Panc1 (cell line): ENCODE measurements at regions of chr1 and their contacts with region 1.

Region 1: GRCh38 chr1:20151906-20152598 is 12.9 kb downstream of the PLA2G2F start:
- DNase-seq: peak; percentile 30
- ATAC-seq: peak; percentile 95
- H3K4me3 ChIP-seq: peak overlapping the region; percentile 25 to 54
- H3K27ac ChIP-seq: no peak overlapping the region
- H3K4me1 ChIP-seq: peaks cover 4% of the 10 kb centered on the region; the same call in 1 of the 2 replicates
- H3K27me3 ChIP-seq: no peaks in the 10 kb centered on the region
- CTCF ChIP-seq: peak; percentile 94

Region 2: DNA sequence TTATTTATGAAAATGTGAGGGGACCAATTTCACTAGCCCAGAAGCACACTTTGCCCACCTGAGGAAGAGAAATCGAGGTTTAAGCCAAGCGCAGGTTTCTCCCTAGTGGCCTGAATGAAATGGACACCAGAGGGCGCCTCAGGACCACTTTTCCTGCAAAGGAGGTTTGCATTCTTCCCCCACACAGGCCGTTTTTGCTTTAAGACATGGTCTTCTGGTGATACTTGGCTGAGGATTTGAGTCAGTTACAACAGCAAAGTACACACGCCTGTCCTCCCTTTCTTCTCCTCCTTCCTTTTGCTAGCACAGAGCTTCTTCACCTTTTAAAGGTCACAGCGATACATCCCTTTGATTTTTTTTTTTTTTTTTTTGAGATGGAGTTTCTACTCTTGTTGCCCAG is 234.0 kb before region 1 on chr1:
- CTCF ChIA-PET with region 1: interaction called, 11 read pairs
- POLR2A ChIA-PET with region 1: interaction called, 5 read pairs
- in situ Hi-C with region 1: no loop called
- intact Hi-C with region 1: loop called (anchors 2 kb)
- DNase-seq: peak; percentile 64
- ATAC-seq: peak; percentile 84
- H3K4me3 ChIP-seq: no peak overlapping the region
- H3K27ac ChIP-seq: no peak overlapping the region
- H3K4me1 ChIP-seq: no peaks in the 10 kb centered on the region
- H3K27me3 ChIP-seq: no peaks in the 10 kb centered on the region
- CTCF ChIP-seq: peak; percentile 91

Region 3: GRCh38 chr1:19974822-19975416 is 177.1 kb before region 1 on chr1:
- CTCF ChIA-PET with region 1: interaction called, 12 read pairs
- POLR2A ChIA-PET with region 1: no interaction called
- in situ Hi-C with region 1: no loop called
- intact Hi-C with region 1: loop called (anchors 2 kb)
- DNase-seq: peak; percentile 45
- ATAC-seq: peak; percentile 91
- H3K4me3 ChIP-seq: no peak overlapping the region
- H3K27ac ChIP-seq: no peak overlapping the region
- H3K4me1 ChIP-seq: no peaks in the 10 kb centered on the region
- H3K27me3 ChIP-seq: peaks cover 15% of the 10 kb centered on the region
- CTCF ChIP-seq: peak; percentile 92

Region 4: DNA sequence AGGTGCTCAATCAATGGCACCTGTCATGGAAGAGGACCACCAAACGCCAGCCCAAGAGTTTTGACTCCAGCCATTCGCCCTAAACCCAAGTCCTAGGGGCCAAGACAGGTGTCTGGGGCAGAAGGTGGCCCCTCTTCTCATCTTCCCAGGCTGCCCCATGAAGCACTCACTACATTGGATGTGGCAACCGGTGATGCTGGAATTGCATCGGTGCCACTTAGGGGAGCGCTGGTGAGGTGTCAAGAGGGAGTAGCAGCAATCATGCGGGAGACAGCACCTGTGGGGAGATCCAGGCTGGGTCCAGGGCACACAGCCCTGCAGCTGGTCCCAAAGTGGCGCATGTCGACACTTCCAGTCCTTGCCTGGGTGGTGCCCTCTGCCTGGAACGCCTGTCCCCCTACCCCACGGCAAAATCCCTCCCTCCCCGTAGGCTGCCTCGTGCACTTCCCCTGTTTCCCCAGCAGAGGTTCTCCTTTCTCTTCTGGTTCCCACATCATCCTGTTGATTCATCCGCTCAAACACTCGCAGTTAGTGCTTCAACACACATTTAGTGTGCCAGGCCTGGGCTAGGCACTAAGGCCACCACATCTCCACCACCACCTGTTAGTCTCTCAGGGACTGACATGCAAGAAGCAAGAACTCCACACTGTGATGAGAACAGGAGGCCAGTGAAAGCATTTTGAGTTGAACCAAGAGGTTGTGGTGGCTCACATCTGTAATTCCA is 51.3 kb before region 1 on chr1:
- CTCF ChIA-PET with region 1: interaction called, 3 read pairs
- POLR2A ChIA-PET with region 1: no interaction called
- in situ Hi-C with region 1: no loop called
- intact Hi-C with region 1: loop called (anchors 2 kb)
- DNase-seq: peak; percentile 56
- ATAC-seq: peak; percentile 91
- H3K4me3 ChIP-seq: no peak overlapping the region
- H3K27ac ChIP-seq: no peak overlapping the region
- H3K4me1 ChIP-seq: no peaks in the 10 kb centered on the region
- H3K27me3 ChIP-seq: no peaks in the 10 kb centered on the region
- CTCF ChIP-seq: peak; percentile 87

Region 5: DNA sequence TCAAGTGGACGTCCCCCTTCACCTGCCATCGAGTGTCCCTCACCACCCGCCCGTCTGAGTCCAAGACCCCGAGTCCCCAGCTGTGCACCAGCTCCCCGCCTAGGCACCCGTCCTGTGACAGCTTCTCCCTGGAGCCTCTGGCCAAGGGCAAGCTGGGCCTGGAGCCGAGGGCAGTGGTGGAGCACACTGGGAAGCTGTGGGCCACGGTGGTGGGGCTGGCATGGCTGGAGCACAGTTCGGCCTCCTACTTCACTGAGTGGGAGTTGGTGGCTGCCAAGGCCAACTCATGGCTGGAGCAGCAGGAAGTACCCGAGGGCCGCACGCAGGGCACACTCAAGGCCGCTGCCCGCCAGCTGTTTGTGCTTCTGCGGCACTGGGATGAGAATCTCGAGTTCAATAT is 201.8 kb after region 1 on chr1:
- CTCF ChIA-PET with region 1: interaction called, 16 read pairs
- POLR2A ChIA-PET with region 1: no interaction called
- in situ Hi-C with region 1: no loop called
- intact Hi-C with region 1: no loop called
- DNase-seq: no peak
- ATAC-seq: no peak
- H3K4me3 ChIP-seq: no peak overlapping the region
- H3K27ac ChIP-seq: no peak overlapping the region
- H3K4me1 ChIP-seq: no peaks in the 10 kb centered on the region
- H3K27me3 ChIP-seq: peaks cover 9% of the 10 kb centered on the region; the same call in 1 of the 2 replicates
- CTCF ChIP-seq: no peak